ENCODE measurements at regions of chr1 and their contacts with region 1.

Region 1: GRCh38 chr1:116377541-116378529 is 4.8 kb downstream of the ATP1A1 start:
- DNase-seq: peak; percentile 60 to 72 (median 68)
- H3K4me3 ChIP-seq: peak overlapping the region in 1 of 2 donors; percentile 32
- H3K4me3 Mint-ChIP-seq: peak overlapping the region; percentile 81 to 99 (median 88)
- H3K27ac ChIP-seq: peak overlapping the region; percentile 71
- H3K27ac Mint-ChIP-seq: peak overlapping the region; percentile 90 to 96 (median 94)
- H3K4me1 ChIP-seq: peaks cover 84% of the 10 kb centered on the region
- H3K4me1 Mint-ChIP-seq: peaks cover 64 to 86% (median 77%) of the 10 kb centered on the region in 4 donors
- H3K27me3 ChIP-seq: no peaks in the 10 kb centered on the region
- H3K27me3 Mint-ChIP-seq: peaks cover 0 to 1% of the 10 kb centered on the region in 2 donors

Region 2: DNA sequence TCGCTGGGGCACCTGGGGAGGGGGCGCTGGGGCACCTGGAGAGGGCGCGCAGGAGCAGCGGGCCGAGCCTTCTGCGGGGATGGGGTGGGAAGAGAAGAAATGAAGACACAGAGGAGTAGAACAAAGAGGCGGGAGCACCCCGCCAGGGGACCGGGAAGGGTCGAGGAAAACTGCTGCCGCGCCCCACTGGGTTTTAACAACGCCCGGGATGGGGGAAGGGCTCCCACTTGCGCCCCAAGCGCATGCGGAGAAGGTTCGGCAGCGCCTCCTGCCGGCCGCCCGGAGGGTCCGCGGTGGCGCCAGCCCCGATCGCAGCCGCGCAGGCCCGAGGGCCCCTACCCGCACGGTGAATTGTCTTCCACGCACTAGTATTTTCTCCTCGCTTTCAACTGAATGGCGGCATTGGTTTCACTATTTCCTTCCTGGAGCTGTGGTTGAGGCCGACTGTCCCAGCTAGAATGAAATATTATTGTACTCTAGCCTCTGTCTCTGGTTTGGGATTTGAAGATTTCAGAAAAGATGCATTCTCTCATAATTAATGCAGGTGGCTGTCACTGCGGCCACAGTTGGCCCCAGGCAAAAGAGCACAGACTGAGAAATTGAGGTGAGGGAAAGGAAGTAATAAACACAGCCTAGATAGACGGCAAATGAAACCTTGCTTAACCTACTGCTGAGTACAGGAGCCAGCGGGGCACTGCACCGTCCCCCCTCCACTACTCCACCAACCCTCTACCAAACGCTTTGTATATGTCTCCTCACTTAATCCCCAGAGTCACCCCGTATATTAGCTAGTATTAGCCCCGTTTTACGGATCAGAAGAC is 209.3 kb before region 1 on chr1:
- CTCF ChIA-PET with region 1: interaction called, 3 read pairs
- POLR2A ChIA-PET with region 1: no interaction called
- intact Hi-C with region 1: loop called (anchors 5 kb)
- DNase-seq: peak; percentile 77 to 84 (median 83)
- H3K4me3 ChIP-seq: peak overlapping the region; percentile 13 to 71
- H3K4me3 Mint-ChIP-seq: peak overlapping the region; percentile 63 to 94 (median 88)
- H3K27ac ChIP-seq: peak overlapping the region; percentile 55
- H3K27ac Mint-ChIP-seq: peak overlapping the region; percentile 33 to 96 (median 90)
- H3K4me1 ChIP-seq: peaks cover 12% of the 10 kb centered on the region
- H3K4me1 Mint-ChIP-seq: peaks cover 12 to 22% (median 17%) of the 10 kb centered on the region in 4 donors
- H3K27me3 ChIP-seq: no peaks in the 10 kb centered on the region
- H3K27me3 Mint-ChIP-seq: peaks cover 0 to 1% of the 10 kb centered on the region in 2 donors

Region 3: DNA sequence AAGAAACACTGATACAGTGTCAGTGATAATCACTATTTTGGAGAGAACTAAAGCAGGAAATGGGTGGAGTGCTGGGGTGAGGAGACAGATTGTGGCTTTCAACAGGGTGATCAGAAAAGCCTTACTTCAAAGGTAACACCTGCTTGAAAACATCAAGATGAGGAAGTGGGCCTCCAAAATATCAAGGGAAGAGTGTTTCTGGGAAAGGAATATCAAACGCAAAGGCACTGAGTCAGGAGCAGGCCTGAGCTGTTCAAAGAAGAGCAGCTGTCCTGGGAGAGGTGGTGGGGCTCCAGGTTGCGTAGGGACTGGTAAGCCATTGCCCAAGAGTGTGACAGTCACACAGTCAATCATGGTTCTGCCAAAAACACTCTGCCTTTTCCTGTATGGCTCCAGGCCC is 51.9 kb before region 1 on chr1:
- CTCF ChIA-PET with region 1: interaction called, 18 read pairs
- POLR2A ChIA-PET with region 1: interaction called, 32 read pairs
- intact Hi-C with region 1: loop called (anchors 1 kb)
- DNase-seq: peak; percentile 56 to 72 (median 68)
- H3K4me3 ChIP-seq: peak overlapping the region in 1 of 2 donors; percentile 19
- H3K4me3 Mint-ChIP-seq: peak overlapping the region; percentile 53 to 83 (median 74)
- H3K27ac ChIP-seq: peak overlapping the region; percentile 60
- H3K27ac Mint-ChIP-seq: peak overlapping the region; percentile 74 to 98 (median 90)
- H3K4me1 ChIP-seq: peaks cover 79% of the 10 kb centered on the region
- H3K4me1 Mint-ChIP-seq: peaks cover 56 to 91% (median 78%) of the 10 kb centered on the region in 4 donors
- H3K27me3 ChIP-seq: no peaks in the 10 kb centered on the region
- H3K27me3 Mint-ChIP-seq: no peaks in the 10 kb centered on the region

Region 4: DNA sequence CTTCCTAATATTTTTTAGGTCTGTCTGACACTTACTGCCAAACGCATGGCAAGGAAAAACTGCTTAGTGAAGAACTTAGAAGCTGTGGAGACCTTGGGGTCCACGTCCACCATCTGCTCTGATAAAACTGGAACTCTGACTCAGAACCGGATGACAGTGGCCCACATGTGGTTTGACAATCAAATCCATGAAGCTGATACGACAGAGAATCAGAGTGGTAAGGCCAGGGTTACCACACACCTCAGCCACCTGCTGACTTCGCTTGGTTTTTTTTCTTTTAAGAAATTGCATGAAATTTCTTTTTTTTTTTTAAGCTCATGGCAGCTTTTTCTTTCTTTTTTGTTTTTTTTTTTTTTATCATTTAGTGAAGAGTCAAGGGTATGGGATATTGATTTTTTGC is 12.4 kb after region 1 on chr1:
- CTCF ChIA-PET with region 1: interaction called, 15 read pairs
- POLR2A ChIA-PET with region 1: interaction called, 81 read pairs
- intact Hi-C with region 1: loop called (anchors 1 kb)
- DNase-seq: peak; percentile 49 to 85 (median 66)
- H3K4me3 ChIP-seq: no peak overlapping the region
- H3K4me3 Mint-ChIP-seq: peak overlapping the region in 4 of 8 donors; percentile 10 to 64 (median 36)
- H3K27ac ChIP-seq: peak overlapping the region; percentile 41
- H3K27ac Mint-ChIP-seq: peak overlapping the region; percentile 55 to 94 (median 86)
- H3K4me1 ChIP-seq: peaks cover 39% of the 10 kb centered on the region
- H3K4me1 Mint-ChIP-seq: peaks cover 42 to 63% (median 46%) of the 10 kb centered on the region in 4 donors
- H3K27me3 ChIP-seq: no peaks in the 10 kb centered on the region
- H3K27me3 Mint-ChIP-seq: no peaks in the 10 kb centered on the region

Region 5: DNA sequence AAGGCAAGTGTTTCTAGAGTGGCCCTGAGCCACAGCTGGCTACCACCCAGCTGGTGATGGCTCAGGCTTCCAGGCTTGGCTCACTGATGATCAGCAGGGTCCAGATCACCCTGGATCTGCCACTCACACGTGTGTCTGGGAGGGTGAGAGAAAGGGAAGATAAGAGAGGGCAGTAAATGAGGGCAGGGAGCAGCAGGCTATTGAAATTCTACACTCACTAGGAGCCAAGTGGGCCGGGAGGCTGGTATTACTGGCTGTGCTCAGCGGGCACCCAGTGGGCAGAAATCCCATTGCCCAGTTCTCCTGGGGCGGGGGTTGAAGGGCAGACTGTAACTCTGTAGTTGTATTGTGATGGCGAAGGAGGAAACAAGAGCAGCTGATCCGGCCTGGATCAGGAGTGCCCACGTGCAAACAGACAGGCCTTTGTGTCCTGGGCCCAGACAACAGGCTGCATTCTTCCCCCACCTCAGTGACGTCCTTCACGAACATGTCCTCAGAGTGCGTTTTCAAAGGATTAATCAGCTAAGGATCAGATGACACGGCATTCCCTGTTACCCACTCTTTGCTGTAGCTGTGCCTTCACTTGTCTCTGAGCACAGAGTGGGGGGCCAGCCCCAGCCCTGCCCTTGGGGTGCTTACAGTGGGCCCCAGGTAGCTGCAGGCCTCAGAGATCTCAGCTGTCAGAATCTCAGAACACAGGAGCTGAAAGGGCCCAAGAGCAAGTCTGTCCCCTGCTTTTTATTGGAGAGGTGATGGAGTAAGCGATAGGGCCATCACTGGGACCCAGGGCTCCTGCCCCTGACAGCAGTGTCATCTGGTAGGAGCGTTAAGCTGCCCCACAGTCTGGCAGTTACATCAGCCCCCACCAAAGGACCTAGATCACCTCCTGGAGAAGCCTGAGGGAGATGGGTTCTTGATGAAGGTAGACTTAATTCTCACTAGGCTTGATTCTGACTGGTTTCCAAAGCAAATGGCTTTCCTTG is 55.7 kb after region 1 on chr1:
- CTCF ChIA-PET with region 1: no interaction called
- POLR2A ChIA-PET with region 1: interaction called, 7 read pairs
- intact Hi-C with region 1: loop called (anchors 5 kb)
- DNase-seq: no peak
- H3K4me3 ChIP-seq: no peak overlapping the region
- H3K4me3 Mint-ChIP-seq: no peak overlapping the region
- H3K27ac ChIP-seq: no peak overlapping the region
- H3K27ac Mint-ChIP-seq: no peak overlapping the region
- H3K4me1 ChIP-seq: no peaks in the 10 kb centered on the region
- H3K4me1 Mint-ChIP-seq: no peaks in the 10 kb centered on the region
- H3K27me3 ChIP-seq: no peaks in the 10 kb centered on the region
- H3K27me3 Mint-ChIP-seq: no peaks in the 10 kb centered on the region

Measured in CD4-positive, alpha-beta memory T cell (primary cell).